Heart right ventricle (tissue), 16 donors: ENCODE measurements at regions of chr2 and their contacts with region 1.

Region 1: GRCh38 chr2:218476676-218477075 is 57.8 kb downstream of the VIL1 start:
- DNase-seq: no peak
- ATAC-seq: no peak
- H3K4me3 ChIP-seq: no peak overlapping the region
- H3K27ac ChIP-seq: no peak overlapping the region
- H3K4me1 ChIP-seq: peaks cover 0 to 15% (median 0%) of the 10 kb centered on the region in 9 donors
- H3K27me3 ChIP-seq: no peaks in the 10 kb centered on the region
- CTCF ChIP-seq: no peak

Region 2: DNA sequence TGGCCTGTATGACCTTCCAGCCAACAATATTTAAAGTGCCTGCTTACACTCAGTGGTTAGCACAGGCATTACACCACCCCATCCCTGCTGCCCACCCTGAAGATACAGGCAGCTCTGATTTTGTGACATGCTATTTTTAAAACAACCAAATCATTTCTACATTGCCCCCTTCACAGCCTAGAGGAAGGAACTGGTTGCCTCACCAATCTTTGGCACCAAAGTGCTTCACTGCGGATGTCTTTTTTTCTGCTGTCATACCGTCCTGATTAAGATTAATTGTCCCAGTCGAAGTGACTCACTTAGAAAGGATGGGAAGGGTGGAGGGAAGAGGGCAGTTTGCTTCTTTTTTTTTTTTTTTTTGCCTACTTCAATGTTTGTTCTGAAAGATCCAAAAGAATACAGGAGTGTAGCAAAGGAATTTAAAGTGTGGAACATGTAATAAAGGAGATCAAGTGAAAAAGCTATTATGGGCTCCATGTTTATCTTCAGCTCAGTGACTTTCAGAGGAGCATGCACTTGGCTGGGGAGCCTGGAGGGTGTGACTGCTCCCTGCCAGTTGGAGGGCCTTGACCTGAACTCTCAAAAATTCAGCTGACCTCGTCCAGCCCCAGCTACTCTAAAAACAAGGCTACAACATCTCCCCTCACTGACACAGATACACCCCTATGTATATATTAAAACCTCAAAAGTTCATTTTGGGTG is 1115.7 kb before region 1 on chr2:
- intact Hi-C with region 1: loop called in 1 of 10 experiments (anchors 5 kb)
- DNase-seq: peak in 1 of 2 donors; percentile 25
- ATAC-seq: peak; percentile 52 to 83 (median 64)
- H3K4me3 ChIP-seq: no peak overlapping the region
- H3K27ac ChIP-seq: peak overlapping the region; percentile 0 to 75 (median 50)
- H3K4me1 ChIP-seq: peaks cover 6 to 51% (median 32%) of the 10 kb centered on the region in 9 donors
- H3K27me3 ChIP-seq: no peaks in the 10 kb centered on the region
- CTCF ChIP-seq: no peak